CD4-positive, alpha-beta memory T cell (primary cell): ENCODE measurements at regions of chr20 and their contacts with region 1.

Region 1: GRCh38 chr20:36728986-36729385 is 16.9 kb downstream of the NDRG3 start:
- DNase-seq: no peak
- H3K4me3 ChIP-seq: no peak overlapping the region
- H3K4me3 Mint-ChIP-seq: no peak overlapping the region
- H3K27ac ChIP-seq: no peak overlapping the region
- H3K27ac Mint-ChIP-seq: peak overlapping the region in 1 of 7 donors; percentile 84
- H3K4me1 ChIP-seq: peaks cover 14% of the 10 kb centered on the region
- H3K4me1 Mint-ChIP-seq: peaks cover 18 to 31% (median 25%) of the 10 kb centered on the region in 4 donors
- H3K27me3 ChIP-seq: no peaks in the 10 kb centered on the region
- H3K27me3 Mint-ChIP-seq: no peaks in the 10 kb centered on the region

Region 2: DNA sequence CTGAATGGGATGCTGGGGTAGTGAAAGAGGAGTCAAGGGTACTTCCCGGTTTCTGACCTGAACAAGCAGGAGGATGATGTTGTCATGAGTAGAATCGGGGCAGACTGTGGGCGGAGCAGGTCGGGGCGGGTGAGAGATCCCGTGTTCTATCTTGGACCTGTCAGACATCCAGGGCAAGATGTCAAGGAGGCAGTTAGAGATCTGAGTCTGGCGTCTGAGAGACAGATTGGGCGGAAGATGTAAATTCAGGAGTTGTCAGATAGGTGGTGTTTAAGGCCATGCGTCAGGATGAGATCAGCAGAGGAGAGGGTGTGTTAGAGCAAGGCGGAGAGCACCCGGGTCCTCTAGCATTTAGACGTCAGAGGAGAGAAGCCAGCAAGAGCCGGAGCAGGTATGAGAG is 307.3 kb before region 1 on chr20:
- CTCF ChIA-PET with region 1: no interaction called
- POLR2A ChIA-PET with region 1: no interaction called
- intact Hi-C with region 1: no loop called
- DNase-seq: no peak
- H3K4me3 ChIP-seq: no peak overlapping the region
- H3K4me3 Mint-ChIP-seq: peak overlapping the region in 1 of 8 donors; percentile 4
- H3K27ac ChIP-seq: no peak overlapping the region
- H3K27ac Mint-ChIP-seq: no peak overlapping the region
- H3K4me1 ChIP-seq: no peaks in the 10 kb centered on the region
- H3K4me1 Mint-ChIP-seq: peaks cover 0 to 3% (median 0%) of the 10 kb centered on the region in 4 donors
- H3K27me3 ChIP-seq: no peaks in the 10 kb centered on the region
- H3K27me3 Mint-ChIP-seq: peaks cover 16% of the 10 kb centered on the region in 2 donors

Region 3: DNA sequence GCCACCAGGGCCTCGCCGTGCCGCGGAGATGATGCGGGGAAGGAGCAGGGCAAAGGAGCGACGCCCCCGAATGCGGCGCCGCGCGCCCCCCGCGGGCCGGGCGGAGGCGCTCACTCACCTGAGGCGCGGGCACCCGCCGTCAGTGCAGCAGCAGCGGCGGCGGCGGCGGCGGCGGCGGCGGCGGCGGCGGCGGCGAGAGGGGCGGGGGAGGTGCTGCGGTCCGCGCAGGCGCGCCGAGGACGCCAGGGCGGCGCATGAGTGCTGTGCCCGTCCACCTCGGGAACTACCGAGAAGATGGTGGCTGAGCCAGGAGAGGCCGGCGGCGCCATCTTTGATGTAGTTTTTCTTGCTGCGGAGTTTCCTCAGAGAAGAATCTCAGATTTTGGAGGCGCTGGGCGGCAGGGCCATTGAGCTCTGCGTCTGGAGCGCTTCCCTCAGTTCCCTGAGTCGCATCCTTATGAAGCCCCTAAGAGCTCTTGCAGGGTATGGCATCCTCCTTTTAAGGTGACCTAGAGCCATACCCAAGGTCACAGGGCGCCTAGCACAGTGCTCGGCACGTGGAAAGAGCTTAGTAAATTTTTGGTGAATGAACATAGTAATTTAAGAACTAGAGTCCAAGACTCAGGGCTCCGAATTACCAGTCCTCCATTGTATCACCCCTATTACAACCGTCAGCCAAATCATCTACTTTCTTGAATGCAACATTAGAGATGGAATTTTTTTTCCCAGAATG is 17.1 kb after region 1 on chr20 and contains the start of gene NDRG3:
- CTCF ChIA-PET with region 1: interaction called, 28 read pairs
- POLR2A ChIA-PET with region 1: interaction called, 78 read pairs
- intact Hi-C with region 1: loop called (anchors 1 kb)
- DNase-seq: peak; percentile 90 to 94 (median 93)
- H3K4me3 ChIP-seq: peak within 1 kb of the TSS; percentile 79 to 86
- H3K4me3 Mint-ChIP-seq: peak within 1 kb of the TSS; percentile 88 to 95 (median 91)
- H3K27ac ChIP-seq: peak within 1 kb of the TSS; percentile 63
- H3K27ac Mint-ChIP-seq: peak within 1 kb of the TSS; percentile 90 to 97 (median 94)
- H3K4me1 ChIP-seq: peaks cover 21% of the 10 kb centered on the region
- H3K4me1 Mint-ChIP-seq: peaks cover 19 to 41% (median 21%) of the 10 kb centered on the region in 4 donors
- H3K27me3 ChIP-seq: no peaks in the 10 kb centered on the region
- H3K27me3 Mint-ChIP-seq: no peaks in the 10 kb centered on the region
- total RNA-seq, gene NDRG3: 36.1 to 36.2 TPM

Region 4: GRCh38 chr20:36895036-36895435 is 166.1 kb after region 1 on chr20:
- CTCF ChIA-PET with region 1: no interaction called
- POLR2A ChIA-PET with region 1: no interaction called
- intact Hi-C with region 1: no loop called
- DNase-seq: no peak
- H3K4me3 ChIP-seq: no peak overlapping the region
- H3K4me3 Mint-ChIP-seq: no peak overlapping the region
- H3K27ac ChIP-seq: no peak overlapping the region
- H3K27ac Mint-ChIP-seq: peak overlapping the region in 6 of 7 donors; percentile 37 to 90 (median 58)
- H3K4me1 ChIP-seq: peaks cover 7% of the 10 kb centered on the region
- H3K4me1 Mint-ChIP-seq: peaks cover 5 to 10% (median 7%) of the 10 kb centered on the region in 4 donors
- H3K27me3 ChIP-seq: no peaks in the 10 kb centered on the region
- H3K27me3 Mint-ChIP-seq: no peaks in the 10 kb centered on the region